ENCODE measurements at regions of chr1 and their contacts with region 1.

Region 1: GRCh38 chr1:32817159-32817814 is at the starts of genes S100PBP and YARS1:
- DNase-seq: peak; percentile 90 to 99
- H3K4me3 ChIP-seq: peak within 1 kb of the TSS; percentile 99
- H3K27ac ChIP-seq: peak within 1 kb of the TSS; percentile 89
- H3K4me1 ChIP-seq: peaks cover 38% of the 10 kb centered on the region
- H3K27me3 ChIP-seq: no peaks in the 10 kb centered on the region
- CTCF ChIP-seq: no peak
- total RNA-seq, gene S100PBP: 42.4 and 47.0 TPM in 2 replicates
- total RNA-seq, gene YARS1: 180 and 187 TPM in 2 replicates

Region 2: GRCh38 chr1:32394141-32394889 is 423.0 kb before region 1 on chr1 and contains the start of gene BSDC1:
- CTCF ChIA-PET with region 1: no interaction called
- POLR2A ChIA-PET with region 1: no interaction called
- intact Hi-C with region 1: loop called (anchors 1 kb)
- DNase-seq: peak; percentile 97 to 98
- H3K4me3 ChIP-seq: peak within 1 kb of the TSS; percentile 71
- H3K27ac ChIP-seq: peak within 1 kb of the TSS; percentile 59
- H3K4me1 ChIP-seq: peaks cover 22% of the 10 kb centered on the region
- H3K27me3 ChIP-seq: no peaks in the 10 kb centered on the region
- CTCF ChIP-seq: no peak
- total RNA-seq, gene BSDC1: 74.0 and 76.2 TPM in 2 replicates

Region 3: GRCh38 chr1:32676945-32677344 is 140.3 kb before region 1 on chr1:
- CTCF ChIA-PET with region 1: no interaction called
- POLR2A ChIA-PET with region 1: no interaction called
- intact Hi-C with region 1: no loop called
- DNase-seq: no peak
- H3K4me3 ChIP-seq: no peak overlapping the region
- H3K27ac ChIP-seq: no peak overlapping the region
- H3K4me1 ChIP-seq: no peaks in the 10 kb centered on the region
- H3K27me3 ChIP-seq: no peaks in the 10 kb centered on the region
- CTCF ChIP-seq: no peak

Region 4: GRCh38 chr1:32716312-32717148 is 100.8 kb before region 1 on chr1:
- CTCF ChIA-PET with region 1: no interaction called
- POLR2A ChIA-PET with region 1: no interaction called
- intact Hi-C with region 1: loop called (anchors 5 kb)
- DNase-seq: peak; percentile 94 to 98
- H3K4me3 ChIP-seq: peak overlapping the region; percentile 40; the same call in 1 of the 2 replicates
- H3K27ac ChIP-seq: peak overlapping the region; percentile 83
- H3K4me1 ChIP-seq: peaks cover 39% of the 10 kb centered on the region
- H3K27me3 ChIP-seq: no peaks in the 10 kb centered on the region
- CTCF ChIP-seq: no peak

Region 5: GRCh38 chr1:32786856-32787255 is 30.4 kb before region 1 on chr1:
- CTCF ChIA-PET with region 1: no interaction called
- POLR2A ChIA-PET with region 1: interaction called, 13 read pairs
- intact Hi-C with region 1: no loop called
- DNase-seq: no peak
- H3K4me3 ChIP-seq: no peak overlapping the region
- H3K27ac ChIP-seq: no peak overlapping the region
- H3K4me1 ChIP-seq: peaks cover 54% of the 10 kb centered on the region
- H3K27me3 ChIP-seq: no peaks in the 10 kb centered on the region
- CTCF ChIP-seq: peak; percentile 46

Region 6: DNA sequence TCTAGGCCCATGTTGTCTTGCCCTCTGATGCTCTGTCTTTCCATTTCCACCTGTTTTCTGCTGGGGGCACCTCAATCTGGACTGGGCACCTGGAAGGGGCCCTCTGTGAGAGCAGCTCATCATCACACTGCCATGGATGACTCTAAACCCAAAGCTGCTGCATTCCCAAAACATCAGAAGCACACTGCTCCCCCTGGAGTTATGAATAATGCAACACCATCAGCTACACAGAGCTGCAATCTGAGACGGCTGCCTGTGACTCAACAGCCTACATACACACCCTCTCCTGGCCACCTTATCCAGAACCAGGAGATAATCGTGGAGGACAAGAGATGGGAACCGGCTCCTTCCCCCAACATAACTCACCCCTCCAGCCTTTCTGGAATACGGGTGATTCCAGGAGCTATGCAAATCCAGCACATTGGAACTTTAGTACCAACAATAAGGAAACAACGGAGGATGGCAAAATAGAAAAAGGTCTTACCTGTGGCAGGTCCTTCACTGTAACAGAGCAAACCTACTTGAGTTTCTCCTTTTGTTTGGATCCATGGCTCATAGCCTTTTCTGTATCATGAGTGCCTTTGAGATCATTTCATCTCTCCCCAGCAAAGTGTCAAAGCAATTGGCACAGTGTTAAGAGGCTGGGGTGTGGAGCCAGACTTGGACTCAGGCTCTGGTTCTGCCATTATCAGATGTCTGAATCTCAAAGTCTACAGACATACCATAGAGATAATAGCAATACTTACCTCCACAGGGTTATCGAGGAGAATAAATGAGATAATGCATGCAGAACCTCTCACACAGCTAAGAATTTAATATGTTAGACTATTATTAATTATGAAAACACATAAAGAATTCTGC is 190.1 kb after region 1 on chr1:
- CTCF ChIA-PET with region 1: no interaction called
- POLR2A ChIA-PET with region 1: no interaction called
- intact Hi-C with region 1: loop called (anchors 10 kb)
- DNase-seq: peak; percentile 69 to 84
- H3K4me3 ChIP-seq: no peak overlapping the region
- H3K27ac ChIP-seq: peak overlapping the region; percentile 71
- H3K4me1 ChIP-seq: peaks cover 57% of the 10 kb centered on the region
- H3K27me3 ChIP-seq: no peaks in the 10 kb centered on the region
- CTCF ChIP-seq: peak; percentile 77